SK-N-SH (cell line): ENCODE measurements at regions of chr6 and their contacts with region 1.

Region 1: GRCh38 chr6:53492860-53493634 is 51.9 kb downstream of the GCLC start:
- DNase-seq: peak; percentile 30
- H3K4me3 ChIP-seq: peak overlapping the region; percentile 28 to 40; a peak in 2 of 4 replicates
- H3K27ac ChIP-seq: no peak overlapping the region
- H3K4me1 ChIP-seq: peaks cover 2 to 9% of the 10 kb centered on the region in 2 experiments; a peak in 3 of 4 replicates
- H3K27me3 ChIP-seq: no peaks in the 10 kb centered on the region
- CTCF ChIP-seq: peak; percentile 87
- EP300 ChIP-seq: no peak
- RAD21 ChIP-seq: peak; percentile 83

Region 2: DNA sequence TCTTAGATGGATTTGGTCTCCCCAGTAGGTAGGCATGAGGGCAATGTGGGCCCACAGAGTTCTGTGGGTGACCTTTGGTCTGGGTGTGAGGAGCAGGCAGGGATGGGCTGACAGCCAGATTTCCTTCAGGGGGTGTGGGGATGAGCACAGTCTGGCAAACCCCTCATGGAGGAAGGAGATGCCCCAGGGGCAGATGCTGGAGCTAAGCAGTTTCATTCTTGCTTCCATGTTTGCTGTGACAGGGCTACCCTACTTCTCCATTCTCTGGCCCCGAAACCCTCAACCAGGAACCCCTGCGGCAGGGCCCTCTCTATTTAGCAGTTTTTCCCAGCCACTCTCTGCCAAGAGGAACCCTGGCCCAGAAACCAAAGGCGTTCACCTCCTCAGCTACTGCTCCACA is 11.5 kb after region 1 on chr6:
- CTCF ChIA-PET with region 1: interaction called, 37 read pairs
- POLR2A ChIA-PET with region 1: no interaction called
- DNase-seq: no peak
- H3K4me3 ChIP-seq: no peak overlapping the region
- H3K27ac ChIP-seq: no peak overlapping the region
- H3K4me1 ChIP-seq: no peaks in the 10 kb centered on the region; a peak in 1 of 4 replicates
- H3K27me3 ChIP-seq: no peaks in the 10 kb centered on the region
- CTCF ChIP-seq: no peak
- EP300 ChIP-seq: no peak
- RAD21 ChIP-seq: no peak

Region 3: DNA sequence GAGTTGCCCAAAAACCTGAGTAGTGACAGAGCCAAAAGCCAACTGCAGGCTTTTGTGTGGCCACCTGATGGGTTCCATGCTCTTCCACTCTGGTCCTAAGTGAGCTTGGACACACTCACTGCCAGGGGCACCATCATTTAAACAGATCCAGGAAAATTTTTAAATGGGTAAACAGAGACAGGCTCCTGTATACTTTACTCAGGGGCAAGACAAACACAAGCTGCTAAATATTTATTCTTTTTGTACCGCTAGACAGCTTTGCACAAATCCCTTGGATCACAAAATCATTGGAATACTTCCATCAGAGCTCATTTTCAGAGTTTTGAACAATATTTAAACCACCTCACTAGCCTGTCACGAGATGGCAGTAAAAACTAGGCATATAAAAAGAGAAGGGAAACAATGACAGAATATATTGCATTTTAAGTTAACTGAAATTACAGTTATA is 20.5 kb after region 1 on chr6:
- CTCF ChIA-PET with region 1: interaction called, 37 read pairs
- POLR2A ChIA-PET with region 1: no interaction called
- DNase-seq: no peak
- H3K4me3 ChIP-seq: no peak overlapping the region
- H3K27ac ChIP-seq: no peak overlapping the region
- H3K4me1 ChIP-seq: no peaks in the 10 kb centered on the region; a peak in 2 of 4 replicates
- H3K27me3 ChIP-seq: no peaks in the 10 kb centered on the region
- CTCF ChIP-seq: no peak
- EP300 ChIP-seq: no peak
- RAD21 ChIP-seq: no peak

Region 4: GRCh38 chr6:53544470-53545308 is 51.6 kb after region 1 on chr6 and contains the start of gene GCLC:
- CTCF ChIA-PET with region 1: interaction called, 13 read pairs
- POLR2A ChIA-PET with region 1: interaction called, 4 read pairs
- DNase-seq: peak; percentile 94
- H3K4me3 ChIP-seq: peak within 1 kb of the TSS; percentile 90 to 94
- H3K27ac ChIP-seq: peak within 1 kb of the TSS; percentile 72 to 88; a peak in 3 of 4 replicates
- H3K4me1 ChIP-seq: peaks cover 7 to 14% of the 10 kb centered on the region in 2 experiments; a peak in 3 of 4 replicates
- H3K27me3 ChIP-seq: no peaks in the 10 kb centered on the region
- CTCF ChIP-seq: peak; percentile 56
- EP300 ChIP-seq: peak in 1 of 2 experiments; percentile 19; a peak in 1 of 4 replicates
- RAD21 ChIP-seq: peak; percentile 52
- polyA plus RNA-seq, gene GCLC: 7.5 and 11.2 TPM in 2 replicates

Region 5: DNA sequence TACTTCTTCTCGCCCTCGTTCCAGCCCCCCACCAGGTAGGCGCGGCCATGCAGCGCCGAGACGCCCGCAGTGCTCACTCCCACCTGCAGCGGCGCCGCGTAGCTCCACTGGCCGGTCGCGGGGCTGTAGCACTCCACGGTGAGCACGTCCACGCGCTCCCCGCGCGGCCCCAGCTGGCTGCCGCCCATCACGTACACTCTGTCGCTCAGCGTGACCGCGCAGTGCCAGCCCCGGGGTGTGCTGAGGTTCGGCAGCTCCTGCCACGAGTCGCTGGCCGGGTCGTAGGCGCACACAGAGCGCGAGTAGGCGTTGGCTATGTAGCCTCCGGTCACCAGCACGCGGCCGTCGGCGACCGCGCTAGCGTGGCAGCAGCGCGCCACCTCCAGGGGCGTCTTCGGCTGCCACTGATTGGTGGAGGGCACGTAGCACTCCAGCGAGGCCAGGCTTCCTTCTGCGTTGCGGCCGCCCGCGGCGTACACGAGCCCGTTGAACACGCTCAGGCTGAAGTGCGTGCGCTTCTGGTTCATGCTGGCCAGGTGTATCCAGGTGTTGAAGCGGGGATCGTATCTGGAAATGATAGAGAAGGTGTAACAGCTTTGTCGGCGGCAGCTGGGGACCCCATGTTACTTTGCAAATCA is 158.8 kb after region 1 on chr6:
- CTCF ChIA-PET with region 1: interaction called, 96 read pairs
- POLR2A ChIA-PET with region 1: no interaction called
- DNase-seq: peak; percentile 80
- H3K4me3 ChIP-seq: peak overlapping the region; percentile 52 to 56
- H3K27ac ChIP-seq: no peak overlapping the region
- H3K4me1 ChIP-seq: peaks cover 0 to 13% of the 10 kb centered on the region in 2 experiments; a peak in 1 of 4 replicates
- H3K27me3 ChIP-seq: peaks cover 17% of the 10 kb centered on the region
- CTCF ChIP-seq: no peak
- EP300 ChIP-seq: no peak
- RAD21 ChIP-seq: no peak

Region 6: DNA sequence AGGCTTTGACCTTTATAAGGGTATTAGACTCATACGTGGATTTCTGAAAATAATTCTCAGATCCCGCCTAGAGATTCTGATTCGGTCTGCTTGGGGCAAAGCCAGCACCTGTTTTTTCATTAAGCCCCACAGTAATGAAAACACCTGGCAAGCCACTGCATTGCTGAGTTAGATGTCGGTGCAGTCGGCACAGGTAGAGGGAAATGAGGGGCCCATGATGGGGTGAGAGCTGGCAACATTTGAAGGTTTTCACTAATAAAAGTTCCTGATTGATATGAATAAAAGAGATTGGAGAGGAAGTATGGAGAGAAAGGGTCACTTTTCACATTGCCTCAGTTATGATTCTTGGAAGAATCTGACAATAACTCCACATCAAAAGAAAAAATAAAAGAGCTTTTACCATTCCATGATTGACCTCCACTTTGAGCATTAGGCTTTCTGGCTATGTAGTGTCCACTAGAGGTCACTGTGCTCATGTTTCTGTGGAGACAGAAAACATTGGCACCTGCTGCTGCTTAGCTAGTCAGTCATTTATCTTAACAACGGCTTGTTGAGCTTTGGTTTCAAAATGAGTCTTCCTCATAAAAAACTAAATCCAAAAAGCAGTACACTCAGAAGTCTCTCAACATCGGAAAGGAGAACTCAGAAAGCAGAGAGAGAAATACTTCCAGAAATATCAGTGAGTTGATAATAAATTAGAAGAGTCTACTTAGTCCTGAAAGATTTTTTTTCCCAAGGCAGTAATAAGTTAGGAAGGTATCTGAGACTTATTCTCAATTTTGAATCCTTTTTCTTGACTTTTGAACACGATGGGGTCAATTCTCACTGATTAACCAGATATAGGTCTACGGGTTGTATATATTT is 225.8 kb after region 1 on chr6:
- CTCF ChIA-PET with region 1: interaction called, 159 read pairs
- POLR2A ChIA-PET with region 1: no interaction called
- DNase-seq: peak; percentile 45
- H3K4me3 ChIP-seq: no peak overlapping the region; a peak in 1 of 4 replicates
- H3K27ac ChIP-seq: no peak overlapping the region
- H3K4me1 ChIP-seq: no peaks in the 10 kb centered on the region
- H3K27me3 ChIP-seq: peaks cover 37% of the 10 kb centered on the region; the same call in 1 of the 2 replicates
- CTCF ChIP-seq: peak; percentile 84
- EP300 ChIP-seq: no peak
- RAD21 ChIP-seq: peak; percentile 54